ENCODE measurements at regions of chr1 and their contacts with region 1.

Region 1: GRCh38 chr1:183281553-183282091 is 95.6 kb downstream of the LAMC2 start:
- DNase-seq: peak; percentile 74 to 81 (median 75)
- H3K4me3 ChIP-seq: no peak overlapping the region
- H3K4me3 Mint-ChIP-seq: no peak overlapping the region
- H3K27ac ChIP-seq: peak overlapping the region in 1 of 2 donors; percentile 96
- H3K27ac Mint-ChIP-seq: peak overlapping the region in 6 of 7 donors; percentile 86 to 99 (median 96)
- H3K4me1 ChIP-seq: peaks cover 38 to 39% of the 10 kb centered on the region in 2 donors
- H3K4me1 Mint-ChIP-seq: peaks cover 38% of the 10 kb centered on the region
- H3K27me3 ChIP-seq: no peaks in the 10 kb centered on the region
- H3K27me3 Mint-ChIP-seq: peaks cover 0 to 3% (median 2%) of the 10 kb centered on the region in 3 donors
- CTCF ChIP-seq: peak; percentile 92

Region 2: DNA sequence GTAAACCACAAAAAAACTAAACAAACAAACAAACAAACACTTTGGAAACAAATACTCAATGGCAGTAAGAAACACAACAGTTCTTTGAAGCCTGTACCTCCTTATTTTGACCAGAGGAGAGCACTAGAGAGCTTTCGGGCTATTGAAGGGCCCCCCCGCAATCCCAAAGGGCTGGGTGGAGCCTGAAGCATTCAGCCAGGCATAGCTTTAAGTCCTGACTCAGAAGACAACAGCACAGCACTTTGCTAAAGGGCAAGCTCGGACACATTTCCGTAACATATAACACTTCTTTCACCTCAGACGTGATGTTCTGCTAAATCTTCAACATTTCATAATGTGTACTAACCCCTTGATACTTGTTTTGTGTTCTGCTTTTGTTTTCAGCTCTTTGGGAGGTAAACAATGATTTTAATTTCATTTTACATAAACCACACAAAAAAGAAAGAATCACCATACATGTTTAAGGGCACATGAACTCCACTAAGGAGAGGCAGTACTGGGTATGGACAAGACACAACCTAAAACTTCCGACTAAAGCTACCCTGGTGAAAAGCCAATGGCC is 319.0 kb before region 1 on chr1:
- intact Hi-C with region 1: no loop called
- DNase-seq: peak; percentile 40 to 47 (median 45)
- H3K4me3 ChIP-seq: no peak overlapping the region
- H3K4me3 Mint-ChIP-seq: peak overlapping the region in 1 of 2 donors; percentile 69
- H3K27ac ChIP-seq: no peak overlapping the region
- H3K27ac Mint-ChIP-seq: peak overlapping the region in 1 of 7 donors; percentile 2
- H3K4me1 ChIP-seq: peaks cover 0 to 5% of the 10 kb centered on the region in 2 donors
- H3K4me1 Mint-ChIP-seq: peaks cover 6% of the 10 kb centered on the region
- H3K27me3 ChIP-seq: no peaks in the 10 kb centered on the region
- H3K27me3 Mint-ChIP-seq: peaks cover 1 to 3% (median 3%) of the 10 kb centered on the region in 3 donors
- CTCF ChIP-seq: peak; percentile 73

Region 3: DNA sequence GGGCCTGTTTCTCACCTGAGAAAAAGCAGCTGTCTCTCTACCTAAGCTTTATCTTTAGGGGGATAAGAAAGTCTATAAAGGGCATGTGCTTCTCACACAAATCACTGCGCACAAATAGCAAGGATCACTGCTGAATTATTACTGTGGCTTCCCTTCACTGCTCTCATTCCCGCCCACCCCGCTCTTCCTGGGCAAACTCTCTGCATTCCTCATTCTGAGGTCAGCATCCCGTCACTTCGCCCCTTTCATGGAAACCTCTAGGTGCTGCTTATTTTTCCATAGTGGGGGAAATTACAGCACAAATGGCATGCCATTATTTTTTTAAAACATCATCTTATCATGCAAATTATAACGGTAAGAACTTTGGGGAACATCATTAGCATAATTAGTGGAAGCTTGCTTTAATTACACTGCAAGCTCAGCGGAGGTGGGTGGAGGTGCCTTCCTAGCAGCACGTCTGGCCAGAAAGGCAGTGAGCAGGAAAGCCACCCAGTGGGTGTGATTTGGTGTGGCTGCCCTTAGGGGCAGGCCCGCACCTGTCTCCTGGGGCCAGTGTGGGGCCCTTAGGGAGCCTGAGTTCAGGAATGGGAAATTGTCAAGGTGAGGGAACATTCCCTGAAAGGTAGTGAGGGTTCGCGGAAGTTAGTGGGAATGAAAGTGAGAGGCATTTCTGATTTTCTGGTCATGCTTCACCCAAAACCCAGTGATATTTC is 10.3 kb after region 1 on chr1:
- intact Hi-C with region 1: no loop called
- DNase-seq: no peak
- H3K4me3 ChIP-seq: no peak overlapping the region
- H3K4me3 Mint-ChIP-seq: no peak overlapping the region
- H3K27ac ChIP-seq: no peak overlapping the region
- H3K27ac Mint-ChIP-seq: no peak overlapping the region
- H3K4me1 ChIP-seq: no peaks in the 10 kb centered on the region
- H3K4me1 Mint-ChIP-seq: no peaks in the 10 kb centered on the region
- H3K27me3 ChIP-seq: no peaks in the 10 kb centered on the region
- H3K27me3 Mint-ChIP-seq: peaks cover 0 to 4% (median 1%) of the 10 kb centered on the region in 3 donors
- CTCF ChIP-seq: no peak

Region 4: GRCh38 chr1:183543619-183544204 is 262.1 kb after region 1 on chr1:
- intact Hi-C with region 1: loop called (anchors 5 to 10 kb)
- DNase-seq: peak; percentile 22 to 47 (median 44)
- H3K4me3 ChIP-seq: no peak overlapping the region
- H3K4me3 Mint-ChIP-seq: no peak overlapping the region
- H3K27ac ChIP-seq: peak overlapping the region in 1 of 2 donors; percentile 44
- H3K27ac Mint-ChIP-seq: peak overlapping the region in 3 of 7 donors; percentile 30 to 60 (median 48)
- H3K4me1 ChIP-seq: no peaks in the 10 kb centered on the region
- H3K4me1 Mint-ChIP-seq: peaks cover 3% of the 10 kb centered on the region
- H3K27me3 ChIP-seq: no peaks in the 10 kb centered on the region
- H3K27me3 Mint-ChIP-seq: no peaks in the 10 kb centered on the region
- CTCF ChIP-seq: peak; percentile 66

Region 5: DNA sequence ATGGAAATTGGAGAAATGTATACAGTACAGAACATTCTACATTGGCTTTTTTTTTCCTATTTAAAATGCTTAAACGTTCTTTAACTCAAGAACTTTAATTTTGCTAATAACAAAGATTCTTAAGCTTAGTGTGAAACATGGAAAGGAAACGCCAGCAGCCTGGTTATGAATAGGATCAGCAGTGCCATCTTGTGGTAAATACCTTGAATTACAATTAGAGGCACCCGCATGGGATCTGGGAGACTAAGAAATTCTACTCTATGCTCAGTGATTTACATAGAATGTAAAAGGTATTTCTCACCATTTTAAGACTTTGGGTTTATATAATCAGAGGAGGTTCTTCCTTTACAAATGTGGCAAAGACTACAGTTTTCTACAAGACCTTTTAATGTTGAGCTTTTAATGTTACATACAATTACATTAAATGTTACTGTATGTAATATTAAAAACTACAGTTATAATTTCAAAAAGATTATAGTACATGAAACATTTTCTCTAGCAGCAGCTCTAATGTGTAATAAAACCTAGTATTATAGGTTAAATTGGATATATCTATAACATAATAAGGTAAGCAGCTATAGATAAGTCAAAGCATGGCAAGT is 403.6 kb after region 1 on chr1:
- intact Hi-C with region 1: loop called in 1 of 2 experiments (anchors 5 kb)
- DNase-seq: peak; percentile 38 to 66 (median 47)
- H3K4me3 ChIP-seq: no peak overlapping the region
- H3K4me3 Mint-ChIP-seq: no peak overlapping the region
- H3K27ac ChIP-seq: no peak overlapping the region
- H3K27ac Mint-ChIP-seq: no peak overlapping the region
- H3K4me1 ChIP-seq: no peaks in the 10 kb centered on the region
- H3K4me1 Mint-ChIP-seq: no peaks in the 10 kb centered on the region
- H3K27me3 ChIP-seq: no peaks in the 10 kb centered on the region
- H3K27me3 Mint-ChIP-seq: peaks cover 0 to 9% (median 0%) of the 10 kb centered on the region in 3 donors
- CTCF ChIP-seq: peak; percentile 87

Measured in CD14-positive monocyte (primary cell).